PC-3 (cell line): ENCODE measurements at regions of chr12 and their contacts with region 1.

Region 1: GRCh38 chr12:70590051-70590450 is 47.2 kb downstream of the PTPRB start:
- DNase-seq: peak; percentile 74
- ATAC-seq: peak; percentile 84
- H3K4me3 ChIP-seq: no peak overlapping the region
- H3K27ac ChIP-seq: no peak overlapping the region
- H3K4me1 ChIP-seq: no peaks in the 10 kb centered on the region
- H3K27me3 ChIP-seq: no peaks in the 10 kb centered on the region
- CTCF ChIP-seq: peak; percentile 96

Region 2: DNA sequence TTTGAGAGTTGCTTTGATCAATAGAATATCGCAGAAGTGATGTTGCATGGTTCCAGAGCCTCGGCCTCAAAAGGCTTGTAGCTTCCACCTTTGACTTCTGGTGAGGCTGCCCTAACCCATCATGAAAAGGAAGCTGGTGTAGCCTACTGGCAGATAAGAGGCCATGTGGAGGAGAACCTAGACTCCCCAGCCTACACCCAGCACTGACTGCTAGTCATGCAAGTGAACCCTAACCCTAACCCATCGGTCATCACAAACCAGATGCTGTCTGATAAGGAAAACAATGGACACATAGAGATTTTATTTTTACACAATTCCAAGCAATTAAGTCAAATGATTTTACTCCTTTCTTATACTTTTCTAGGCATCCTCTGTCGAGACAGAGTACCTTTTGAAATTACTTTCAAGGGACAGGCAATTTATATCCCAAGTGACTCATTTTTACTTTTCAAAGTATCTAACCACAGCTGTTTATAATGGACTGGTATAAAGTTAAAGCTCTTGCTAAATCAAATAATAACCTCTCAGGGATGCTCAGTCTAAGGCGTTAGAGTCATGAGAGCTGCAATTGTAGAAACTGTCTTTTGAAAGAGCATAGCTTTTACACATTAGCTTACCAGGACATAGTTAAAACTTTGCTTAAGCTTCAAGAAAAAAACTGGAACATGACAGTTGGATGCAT is 29.6 kb after region 1 on chr12:
- CTCF ChIA-PET with region 1: no interaction called
- POLR2A ChIA-PET with region 1: no interaction called
- intact Hi-C with region 1: no loop called
- DNase-seq: peak; percentile 15
- ATAC-seq: peak; percentile 60
- H3K4me3 ChIP-seq: no peak overlapping the region
- H3K27ac ChIP-seq: no peak overlapping the region
- H3K4me1 ChIP-seq: 0 out of 2 replicates have a peak, but pooled peaks cover 3% of the 10 kb centered on the region
- H3K27me3 ChIP-seq: no peaks in the 10 kb centered on the region
- CTCF ChIP-seq: no peak

Region 3: DNA sequence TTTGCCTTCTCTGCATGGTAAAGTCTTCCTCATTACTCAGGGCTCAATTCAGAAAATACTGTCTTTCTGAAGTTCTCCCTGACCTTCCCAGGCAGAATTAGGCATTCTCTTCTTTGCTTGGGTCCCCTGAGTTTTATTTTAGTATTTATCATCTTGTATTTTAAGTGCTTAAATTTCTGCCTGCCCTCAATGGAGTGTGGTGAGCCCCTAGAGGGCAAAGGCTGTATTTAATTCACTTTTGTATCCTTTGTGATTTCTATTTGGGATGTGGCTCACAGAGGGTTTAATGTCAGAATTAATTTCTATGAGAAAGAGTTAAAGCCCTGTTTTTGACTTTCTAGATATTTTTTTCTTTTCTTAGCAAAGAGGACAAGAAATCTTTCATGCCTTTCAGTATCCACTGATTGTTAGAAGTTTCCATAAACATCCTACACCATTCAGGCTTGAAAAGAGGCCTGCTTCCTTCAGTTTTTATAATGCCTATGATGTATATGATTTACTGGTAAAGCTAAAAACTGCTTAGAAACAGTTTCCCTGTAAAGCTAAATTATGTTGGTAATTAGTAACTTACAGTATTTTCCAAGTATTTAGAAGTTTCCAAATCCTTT is 102.7 kb after region 1 on chr12:
- CTCF ChIA-PET with region 1: no interaction called
- POLR2A ChIA-PET with region 1: no interaction called
- intact Hi-C with region 1: loop called (anchors 1 kb)
- DNase-seq: peak; percentile 58
- ATAC-seq: peak; percentile 71
- H3K4me3 ChIP-seq: no peak overlapping the region
- H3K27ac ChIP-seq: no peak overlapping the region
- H3K4me1 ChIP-seq: peaks cover 10% of the 10 kb centered on the region; the same call in 1 of the 2 replicates
- H3K27me3 ChIP-seq: no peaks in the 10 kb centered on the region
- CTCF ChIP-seq: peak; percentile 80

Region 4: DNA sequence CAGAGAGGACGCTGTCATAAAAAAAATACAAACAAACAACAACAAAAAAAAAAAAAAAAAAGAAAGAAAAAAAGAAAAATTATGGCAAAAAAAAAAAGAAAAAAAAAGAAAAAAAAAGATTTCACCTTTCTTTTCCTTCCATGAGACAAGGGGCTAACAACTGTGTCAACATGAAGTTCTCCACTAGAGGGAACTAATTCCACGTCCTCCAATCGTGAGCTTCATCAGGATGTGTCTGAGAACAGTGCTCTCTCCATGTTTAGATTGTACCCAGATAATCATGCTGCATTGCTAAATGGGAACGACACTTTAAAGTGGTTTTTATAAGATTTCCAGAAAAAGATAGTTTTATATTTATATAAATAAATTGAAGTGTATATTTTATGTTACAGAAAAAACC is 143.3 kb after region 1 on chr12:
- CTCF ChIA-PET with region 1: interaction called, 7 read pairs
- POLR2A ChIA-PET with region 1: no interaction called
- intact Hi-C with region 1: loop called (anchors 1 kb)
- DNase-seq: peak; percentile 91
- ATAC-seq: peak; percentile 93
- H3K4me3 ChIP-seq: no peak overlapping the region
- H3K27ac ChIP-seq: no peak overlapping the region
- H3K4me1 ChIP-seq: peaks cover 4% of the 10 kb centered on the region; the same call in 1 of the 2 replicates
- H3K27me3 ChIP-seq: no peaks in the 10 kb centered on the region
- CTCF ChIP-seq: peak; percentile 71

Region 5: DNA sequence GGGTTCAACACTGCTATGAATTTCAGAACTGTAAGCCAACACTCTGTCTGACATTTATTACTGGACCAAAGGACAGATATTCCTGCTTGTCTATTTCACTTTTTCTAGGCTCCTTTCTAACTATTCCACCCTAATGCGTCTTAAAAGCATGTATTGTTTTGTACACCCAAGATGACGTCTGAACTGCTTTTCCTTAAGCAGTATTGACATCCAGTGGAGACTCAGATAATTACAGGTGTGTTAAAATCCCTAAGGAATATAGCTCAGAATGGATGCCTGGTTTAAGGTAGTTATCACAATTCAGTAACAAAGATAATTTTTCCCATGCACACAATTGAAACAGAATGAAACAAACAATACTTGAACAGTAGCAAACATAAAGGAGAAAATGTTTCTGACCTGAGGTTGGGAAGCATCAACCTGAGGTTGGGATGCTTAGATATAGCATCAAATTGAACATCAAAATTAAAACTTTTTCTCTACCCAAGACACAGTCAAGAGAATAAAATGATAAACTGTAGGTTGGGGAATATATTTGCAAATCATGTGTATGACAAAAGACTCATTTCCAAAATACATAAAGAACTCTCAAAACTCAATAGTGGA is 424.2 kb after region 1 on chr12:
- CTCF ChIA-PET with region 1: interaction called, 4 read pairs
- POLR2A ChIA-PET with region 1: no interaction called
- intact Hi-C with region 1: loop called (anchors 1 kb)
- DNase-seq: peak; percentile 81
- ATAC-seq: peak; percentile 84
- H3K4me3 ChIP-seq: peak overlapping the region; percentile 33; the same call in 1 of the 2 replicates
- H3K27ac ChIP-seq: no peak overlapping the region
- H3K4me1 ChIP-seq: peaks cover 11% of the 10 kb centered on the region
- H3K27me3 ChIP-seq: no peaks in the 10 kb centered on the region
- CTCF ChIP-seq: peak; percentile 91